ENCODE measurements at regions of chr2 and their contacts with region 1.

Region 1: GRCh38 chr2:160994141-160995002 is 165.9 kb upstream of the TANK start:
- DNase-seq: peak; percentile 57
- H3K4me3 ChIP-seq: no peak overlapping the region; a peak in 1 of 4 replicates
- H3K27ac ChIP-seq: no peak overlapping the region
- H3K4me1 ChIP-seq: peaks cover 0 to 2% of the 10 kb centered on the region in 2 experiments; a peak in 1 of 4 replicates
- H3K27me3 ChIP-seq: no peaks in the 10 kb centered on the region
- CTCF ChIP-seq: peak; percentile 91
- EP300 ChIP-seq: no peak
- RAD21 ChIP-seq: peak; percentile 96

Region 2: GRCh38 chr2:160109936-160110673 is 884.3 kb before region 1 on chr2:
- CTCF ChIA-PET with region 1: interaction called, 51 read pairs
- POLR2A ChIA-PET with region 1: no interaction called
- DNase-seq: peak; percentile 71
- H3K4me3 ChIP-seq: no peak overlapping the region; a peak in 1 of 4 replicates
- H3K27ac ChIP-seq: peak overlapping the region in 1 of 2 experiments; percentile 58; a peak in 1 of 4 replicates
- H3K4me1 ChIP-seq: peaks cover 5 to 7% of the 10 kb centered on the region in 2 experiments; a peak in 2 of 4 replicates
- H3K27me3 ChIP-seq: no peaks in the 10 kb centered on the region
- CTCF ChIP-seq: peak; percentile 90
- EP300 ChIP-seq: peak in 1 of 2 experiments; percentile 44; a peak in 3 of 4 replicates
- RAD21 ChIP-seq: peak; percentile 99

Region 3: GRCh38 chr2:160269803-160270570 is 724.4 kb before region 1 on chr2:
- CTCF ChIA-PET with region 1: interaction called, 14 read pairs
- POLR2A ChIA-PET with region 1: no interaction called
- DNase-seq: peak; percentile 76
- H3K4me3 ChIP-seq: peak overlapping the region in 1 of 2 experiments; percentile 17; a peak in 1 of 4 replicates
- H3K27ac ChIP-seq: peak overlapping the region in 1 of 2 experiments; percentile 56; a peak in 3 of 4 replicates
- H3K4me1 ChIP-seq: peaks cover 6 to 14% of the 10 kb centered on the region in 2 experiments
- H3K27me3 ChIP-seq: no peaks in the 10 kb centered on the region
- CTCF ChIP-seq: peak; percentile 41
- EP300 ChIP-seq: peak in 1 of 2 experiments; percentile 21; a peak in 1 of 4 replicates
- RAD21 ChIP-seq: no peak

Region 4: GRCh38 chr2:160429248-160430000 is 564.9 kb before region 1 on chr2:
- CTCF ChIA-PET with region 1: interaction called, 10 read pairs
- POLR2A ChIA-PET with region 1: no interaction called
- DNase-seq: no peak
- H3K4me3 ChIP-seq: no peak overlapping the region; a peak in 1 of 4 replicates
- H3K27ac ChIP-seq: peak overlapping the region; percentile 39 to 64
- H3K4me1 ChIP-seq: peaks cover 17 to 40% of the 10 kb centered on the region in 2 experiments; a peak in 3 of 4 replicates
- H3K27me3 ChIP-seq: no peaks in the 10 kb centered on the region
- CTCF ChIP-seq: peak; percentile 77
- EP300 ChIP-seq: no peak
- RAD21 ChIP-seq: peak; percentile 64

Region 5: DNA sequence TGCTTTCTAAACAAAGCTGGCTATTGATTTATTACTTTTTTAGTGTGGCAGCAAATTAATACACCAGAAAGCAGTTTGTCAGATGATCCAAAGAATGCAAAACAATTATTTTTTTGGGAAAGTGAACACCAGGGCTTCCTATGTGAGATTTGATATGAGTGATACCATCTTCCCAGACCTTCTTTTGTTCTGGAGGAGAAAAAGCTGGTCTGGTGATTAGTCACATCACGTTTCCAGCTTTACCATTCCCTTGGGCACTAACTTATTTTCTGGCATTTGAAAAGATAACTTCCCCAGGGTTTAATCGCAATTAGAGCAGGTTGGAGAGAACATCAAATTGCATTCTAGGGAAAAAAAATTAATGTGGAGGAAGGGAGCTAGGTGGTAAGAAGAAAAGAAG is 17.0 kb before region 1 on chr2:
- CTCF ChIA-PET with region 1: interaction called, 12 read pairs
- POLR2A ChIA-PET with region 1: no interaction called
- DNase-seq: no peak
- H3K4me3 ChIP-seq: no peak overlapping the region
- H3K27ac ChIP-seq: no peak overlapping the region
- H3K4me1 ChIP-seq: no peaks in the 10 kb centered on the region; a peak in 2 of 4 replicates
- H3K27me3 ChIP-seq: no peaks in the 10 kb centered on the region
- CTCF ChIP-seq: no peak
- EP300 ChIP-seq: no peak; a peak in 1 of 4 replicates
- RAD21 ChIP-seq: no peak

Region 6: DNA sequence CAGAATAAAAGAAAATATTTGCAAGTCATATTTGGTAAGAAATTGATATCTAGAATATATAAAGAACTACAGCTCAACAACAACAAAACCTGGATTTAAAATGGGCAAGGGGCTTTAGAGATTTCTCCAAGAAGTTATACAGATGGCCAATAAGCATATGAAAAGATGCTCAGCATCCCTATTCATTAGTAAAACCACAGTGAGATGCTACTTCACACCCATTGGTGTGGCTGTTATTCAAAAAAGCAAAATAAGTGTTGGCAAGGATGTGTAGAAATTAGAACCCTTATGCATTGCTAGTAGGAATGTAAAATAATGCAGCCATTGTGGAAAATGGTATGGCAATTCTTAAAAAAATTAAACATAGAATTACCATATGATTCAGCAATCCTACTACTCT is 195.7 kb after region 1 on chr2:
- CTCF ChIA-PET with region 1: no interaction called
- POLR2A ChIA-PET with region 1: no interaction called
- DNase-seq: no peak
- H3K4me3 ChIP-seq: no peak overlapping the region
- H3K27ac ChIP-seq: no peak overlapping the region
- H3K4me1 ChIP-seq: no peaks in the 10 kb centered on the region; a peak in 1 of 4 replicates
- H3K27me3 ChIP-seq: no peaks in the 10 kb centered on the region
- CTCF ChIP-seq: no peak
- EP300 ChIP-seq: no peak
- RAD21 ChIP-seq: no peak